Body of pancreas (tissue), 4 donors: ENCODE measurements at regions of chr9 and their contacts with region 1.

Region 1: GRCh38 chr9:90870621-90871326 is 69.2 kb downstream of the SYK start:
- DNase-seq: peak; percentile 43 to 58 (median 50)
- ATAC-seq: peak; percentile 38
- H3K4me3 ChIP-seq: no peak overlapping the region
- H3K27ac ChIP-seq: no peak overlapping the region
- H3K4me1 ChIP-seq: no peaks in the 10 kb centered on the region
- H3K27me3 ChIP-seq: no peaks in the 10 kb centered on the region
- CTCF ChIP-seq: peak; percentile 71 to 89 (median 80)
- POLR2A ChIP-seq: no peak

Region 2: DNA sequence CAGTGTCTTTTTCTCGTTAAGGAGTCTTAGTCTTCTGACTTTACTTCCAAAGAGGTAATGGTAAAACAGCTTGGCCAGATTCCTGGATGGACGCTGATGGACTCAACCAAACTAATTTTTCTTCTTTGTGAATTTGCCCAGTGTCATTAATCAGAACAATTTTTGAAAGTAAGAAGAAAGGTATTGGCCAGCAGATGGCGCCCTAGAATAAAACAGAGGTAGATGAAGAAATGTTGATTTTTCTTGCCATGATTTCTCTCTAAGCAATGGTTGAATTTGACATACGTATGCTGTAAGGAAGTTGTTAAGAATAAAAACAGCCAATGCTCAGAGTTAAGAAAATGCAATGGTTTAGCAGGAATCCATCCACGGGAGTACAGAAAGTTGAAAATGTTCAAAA is 728.2 kb before region 1 on chr9:
- intact Hi-C with region 1: loop called (anchors 5 kb)
- DNase-seq: peak; percentile 65 to 81 (median 77)
- ATAC-seq: no peak
- H3K4me3 ChIP-seq: no peak overlapping the region
- H3K27ac ChIP-seq: no peak overlapping the region
- H3K4me1 ChIP-seq: peaks cover 7% of the 10 kb centered on the region
- H3K27me3 ChIP-seq: no peaks in the 10 kb centered on the region
- CTCF ChIP-seq: peak; percentile 30 to 72 (median 61)
- POLR2A ChIP-seq: no peak

Region 3: GRCh38 chr9:90600029-90600428 is 270.7 kb before region 1 on chr9:
- intact Hi-C with region 1: no loop called
- DNase-seq: no peak
- ATAC-seq: no peak
- H3K4me3 ChIP-seq: no peak overlapping the region
- H3K27ac ChIP-seq: no peak overlapping the region
- H3K4me1 ChIP-seq: no peaks in the 10 kb centered on the region
- H3K27me3 ChIP-seq: no peaks in the 10 kb centered on the region
- CTCF ChIP-seq: no peak
- POLR2A ChIP-seq: no peak